ENCODE measurements at regions of chr9 and their contacts with region 1.

Region 1: GRCh38 chr9:131656356-131657036 is 83.4 kb downstream of the RAPGEF1 start:
- DNase-seq: peak; percentile 79 to 89
- ATAC-seq: peak; percentile 87 to 97 (median 94)
- H3K4me3 ChIP-seq: no peak overlapping the region
- H3K4me3 Mint-ChIP-seq: peak overlapping the region; percentile 68
- H3K27ac ChIP-seq: peak overlapping the region; percentile 64
- H3K27ac Mint-ChIP-seq: peak overlapping the region; percentile 92 to 93
- H3K4me1 ChIP-seq: peaks cover 48% of the 10 kb centered on the region
- H3K4me1 Mint-ChIP-seq: peaks cover 61 to 64% of the 10 kb centered on the region in 2 donors
- H3K27me3 ChIP-seq: no peaks in the 10 kb centered on the region
- H3K27me3 Mint-ChIP-seq: no peaks in the 10 kb centered on the region
- CTCF ChIP-seq: no peak

Region 2: GRCh38 chr9:131590908-131591844 is 65.3 kb before region 1 on chr9:
- intact Hi-C with region 1: loop called (anchors 2 kb)
- DNase-seq: peak; percentile 79 to 88
- ATAC-seq: peak; percentile 92 to 96 (median 94)
- H3K4me3 ChIP-seq: no peak overlapping the region
- H3K4me3 Mint-ChIP-seq: peak overlapping the region; percentile 63
- H3K27ac ChIP-seq: peak overlapping the region; percentile 21
- H3K27ac Mint-ChIP-seq: peak overlapping the region; percentile 81 to 89
- H3K4me1 ChIP-seq: peaks cover 23% of the 10 kb centered on the region
- H3K4me1 Mint-ChIP-seq: peaks cover 33 to 41% of the 10 kb centered on the region in 2 donors
- H3K27me3 ChIP-seq: no peaks in the 10 kb centered on the region
- H3K27me3 Mint-ChIP-seq: no peaks in the 10 kb centered on the region
- CTCF ChIP-seq: peak; percentile 90

Region 3: DNA sequence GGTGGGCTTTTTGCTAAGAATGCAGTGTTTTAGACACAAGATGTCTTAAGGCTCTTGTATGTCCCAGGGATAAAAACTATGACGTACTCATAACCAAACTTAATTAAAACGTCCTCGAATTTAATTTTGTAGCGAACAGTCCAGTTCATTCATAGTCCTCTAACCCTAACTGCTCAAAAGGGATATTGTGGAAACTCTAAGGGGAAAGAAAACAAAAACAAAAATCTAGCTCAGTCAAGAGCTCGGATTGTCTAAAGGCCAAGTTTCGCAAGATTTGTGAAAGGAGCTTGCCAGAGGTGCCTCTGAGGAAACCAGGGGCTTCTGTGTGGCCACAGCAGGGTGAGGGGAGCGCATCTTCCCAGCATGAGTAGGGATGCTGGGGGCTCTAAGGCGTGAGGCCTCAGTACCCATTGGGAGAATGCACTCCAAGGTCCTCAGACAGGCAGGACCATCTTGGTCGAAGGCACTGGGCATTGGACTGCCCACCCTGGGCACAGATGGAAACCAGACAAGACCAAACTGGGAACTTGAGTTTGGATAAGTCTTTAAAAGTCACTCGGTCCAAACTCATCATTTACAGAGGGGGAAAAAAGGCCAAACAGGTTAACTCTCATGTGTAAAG is 39.4 kb before region 1 on chr9:
- intact Hi-C with region 1: no loop called
- DNase-seq: no peak
- ATAC-seq: no peak
- H3K4me3 ChIP-seq: no peak overlapping the region
- H3K4me3 Mint-ChIP-seq: no peak overlapping the region
- H3K27ac ChIP-seq: no peak overlapping the region
- H3K27ac Mint-ChIP-seq: peak overlapping the region; percentile 8 to 34
- H3K4me1 ChIP-seq: peaks cover 26% of the 10 kb centered on the region
- H3K4me1 Mint-ChIP-seq: peaks cover 36 to 37% of the 10 kb centered on the region in 2 donors
- H3K27me3 ChIP-seq: no peaks in the 10 kb centered on the region
- H3K27me3 Mint-ChIP-seq: no peaks in the 10 kb centered on the region
- CTCF ChIP-seq: no peak

Region 4: GRCh38 chr9:131627648-131628458 is 28.6 kb before region 1 on chr9:
- intact Hi-C with region 1: loop called (anchors 1 kb)
- DNase-seq: peak; percentile 73 to 92
- ATAC-seq: peak; percentile 82 to 88 (median 83)
- H3K4me3 ChIP-seq: peak overlapping the region; percentile 13
- H3K4me3 Mint-ChIP-seq: peak overlapping the region; percentile 75
- H3K27ac ChIP-seq: peak overlapping the region; percentile 97
- H3K27ac Mint-ChIP-seq: peak overlapping the region; percentile 95 to 98
- H3K4me1 ChIP-seq: peaks cover 85% of the 10 kb centered on the region
- H3K4me1 Mint-ChIP-seq: peaks cover 36 to 61% of the 10 kb centered on the region in 2 donors
- H3K27me3 ChIP-seq: no peaks in the 10 kb centered on the region
- H3K27me3 Mint-ChIP-seq: no peaks in the 10 kb centered on the region
- CTCF ChIP-seq: no peak

Region 5: DNA sequence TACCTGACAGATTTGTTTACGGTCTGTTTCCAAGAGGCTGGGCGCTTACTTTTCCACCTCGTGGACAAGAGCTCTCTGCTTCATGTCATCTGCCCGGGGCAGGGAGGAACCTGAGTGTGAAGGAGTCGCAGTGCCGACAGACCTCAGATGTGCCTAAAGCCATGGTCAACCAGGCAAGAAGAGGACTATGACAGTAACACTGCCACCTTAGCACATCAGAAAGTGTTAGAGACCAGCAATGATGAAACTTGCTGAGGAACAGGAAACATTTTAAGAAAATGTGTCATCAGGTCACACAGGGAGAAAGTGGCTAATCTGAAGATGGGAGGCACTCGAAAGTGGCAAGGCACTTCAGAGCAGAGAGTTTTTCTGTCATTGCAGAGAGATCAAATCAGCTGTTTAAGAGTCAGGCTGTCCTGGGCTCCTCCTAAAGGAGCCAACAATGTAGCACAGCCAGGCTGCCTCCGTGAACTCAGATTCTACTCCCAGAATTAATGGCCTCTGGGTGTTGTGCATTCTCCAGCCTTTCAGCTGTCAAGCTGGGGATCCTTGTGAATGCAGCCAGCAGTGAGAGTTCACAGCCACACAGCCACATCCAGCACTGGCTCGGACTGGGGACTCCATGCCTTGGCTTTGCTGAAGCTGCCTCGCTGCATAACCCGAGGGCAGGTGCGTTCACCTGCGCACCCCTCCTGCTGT is 11.3 kb before region 1 on chr9:
- intact Hi-C with region 1: loop called (anchors 1 kb)
- DNase-seq: peak; percentile 42 to 47
- ATAC-seq: peak; percentile 83 to 87 (median 86)
- H3K4me3 ChIP-seq: no peak overlapping the region
- H3K4me3 Mint-ChIP-seq: peak overlapping the region; percentile 61
- H3K27ac ChIP-seq: peak overlapping the region; percentile 30
- H3K27ac Mint-ChIP-seq: peak overlapping the region; percentile 82 to 91
- H3K4me1 ChIP-seq: peaks cover 31% of the 10 kb centered on the region
- H3K4me1 Mint-ChIP-seq: peaks cover 44 to 52% of the 10 kb centered on the region in 2 donors
- H3K27me3 ChIP-seq: no peaks in the 10 kb centered on the region
- H3K27me3 Mint-ChIP-seq: no peaks in the 10 kb centered on the region
- CTCF ChIP-seq: no peak

Region 6: GRCh38 chr9:131668439-131669268 is 12.2 kb after region 1 on chr9:
- intact Hi-C with region 1: loop called (anchors 1 kb)
- DNase-seq: peak; percentile 72 to 85
- ATAC-seq: peak; percentile 67 to 77 (median 72)
- H3K4me3 ChIP-seq: no peak overlapping the region
- H3K4me3 Mint-ChIP-seq: peak overlapping the region; percentile 66
- H3K27ac ChIP-seq: peak overlapping the region; percentile 92
- H3K27ac Mint-ChIP-seq: peak overlapping the region; percentile 98 to 99
- H3K4me1 ChIP-seq: peaks cover 84% of the 10 kb centered on the region
- H3K4me1 Mint-ChIP-seq: peaks cover 89 to 90% of the 10 kb centered on the region in 2 donors
- H3K27me3 ChIP-seq: no peaks in the 10 kb centered on the region
- H3K27me3 Mint-ChIP-seq: no peaks in the 10 kb centered on the region
- CTCF ChIP-seq: no peak

Region 7: GRCh38 chr9:131678499-131679111 is 22.1 kb after region 1 on chr9:
- intact Hi-C with region 1: loop called (anchors 1 kb)
- DNase-seq: peak; percentile 75 to 83
- ATAC-seq: peak; percentile 93 to 97 (median 97)
- H3K4me3 ChIP-seq: no peak overlapping the region
- H3K4me3 Mint-ChIP-seq: peak overlapping the region; percentile 86
- H3K27ac ChIP-seq: peak overlapping the region; percentile 89
- H3K27ac Mint-ChIP-seq: peak overlapping the region; percentile 99 to 100
- H3K4me1 ChIP-seq: peaks cover 54% of the 10 kb centered on the region
- H3K4me1 Mint-ChIP-seq: peaks cover 83 to 93% of the 10 kb centered on the region in 2 donors
- H3K27me3 ChIP-seq: no peaks in the 10 kb centered on the region
- H3K27me3 Mint-ChIP-seq: no peaks in the 10 kb centered on the region
- CTCF ChIP-seq: no peak

Region 8: DNA sequence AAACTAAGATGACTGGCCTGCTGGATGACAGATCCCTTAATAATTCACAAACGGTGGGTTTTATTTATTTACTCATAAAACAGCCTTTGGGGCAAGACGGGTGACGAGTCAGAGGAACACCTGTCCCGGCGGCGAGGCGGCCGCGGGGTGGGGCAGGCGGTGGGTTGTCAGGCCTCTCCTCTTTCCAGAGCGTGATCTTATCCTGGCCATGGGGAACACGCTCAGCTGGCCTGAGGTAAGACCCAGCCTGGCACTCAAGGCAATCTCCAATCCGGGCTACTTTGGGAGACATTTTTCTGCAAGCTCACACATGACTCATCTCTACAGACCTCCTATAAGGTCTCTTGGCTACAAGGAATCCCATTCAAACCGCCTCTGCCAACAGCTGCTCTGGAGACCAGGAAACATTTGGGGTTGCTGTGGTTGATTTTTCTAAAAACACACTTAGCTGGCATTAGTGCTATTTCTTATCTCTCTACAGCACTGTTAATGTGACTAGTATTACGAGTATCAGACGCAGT is 77.1 kb after region 1 on chr9:
- intact Hi-C with region 1: loop called (anchors 1 kb)
- DNase-seq: peak; percentile 52 to 75
- ATAC-seq: peak in 2 of 3 donors; percentile 6 to 21
- H3K4me3 ChIP-seq: peak overlapping the region; percentile 4
- H3K4me3 Mint-ChIP-seq: peak overlapping the region; percentile 82
- H3K27ac ChIP-seq: peak overlapping the region; percentile 93
- H3K27ac Mint-ChIP-seq: peak overlapping the region; percentile 92 to 95
- H3K4me1 ChIP-seq: peaks cover 99% of the 10 kb centered on the region
- H3K4me1 Mint-ChIP-seq: peaks cover 84 to 87% of the 10 kb centered on the region in 2 donors
- H3K27me3 ChIP-seq: no peaks in the 10 kb centered on the region
- H3K27me3 Mint-ChIP-seq: no peaks in the 10 kb centered on the region
- CTCF ChIP-seq: no peak

Measured in natural killer cell (primary cell).